Cardiac septum (tissue), 1 donor: ENCODE measurements at regions of chr19 and their contacts with region 1.

Region 1: GRCh38 chr19:39532233-39533002 is at the start of gene EID2B:
- DNase-seq: peak; percentile 98
- total RNA-seq, gene EID2B: 2.8 TPM

Region 2: GRCh38 chr19:39397360-39398296 is 134.8 kb before region 1 on chr19:
- intact Hi-C with region 1: loop called (anchors 5 kb)
- DNase-seq: peak; percentile 95

Region 3: GRCh38 chr19:39445265-39446111 is 86.9 kb before region 1 on chr19 and contains the start of gene SUPT5H:
- intact Hi-C with region 1: loop called (anchors 10 kb)
- DNase-seq: peak; percentile 98
- total RNA-seq, gene SUPT5H: 79.9 TPM

Region 4: GRCh38 chr19:39474139-39474622 is 58.2 kb before region 1 on chr19:
- intact Hi-C with region 1: loop called (anchors 2 kb)
- DNase-seq: no peak

Region 5: DNA sequence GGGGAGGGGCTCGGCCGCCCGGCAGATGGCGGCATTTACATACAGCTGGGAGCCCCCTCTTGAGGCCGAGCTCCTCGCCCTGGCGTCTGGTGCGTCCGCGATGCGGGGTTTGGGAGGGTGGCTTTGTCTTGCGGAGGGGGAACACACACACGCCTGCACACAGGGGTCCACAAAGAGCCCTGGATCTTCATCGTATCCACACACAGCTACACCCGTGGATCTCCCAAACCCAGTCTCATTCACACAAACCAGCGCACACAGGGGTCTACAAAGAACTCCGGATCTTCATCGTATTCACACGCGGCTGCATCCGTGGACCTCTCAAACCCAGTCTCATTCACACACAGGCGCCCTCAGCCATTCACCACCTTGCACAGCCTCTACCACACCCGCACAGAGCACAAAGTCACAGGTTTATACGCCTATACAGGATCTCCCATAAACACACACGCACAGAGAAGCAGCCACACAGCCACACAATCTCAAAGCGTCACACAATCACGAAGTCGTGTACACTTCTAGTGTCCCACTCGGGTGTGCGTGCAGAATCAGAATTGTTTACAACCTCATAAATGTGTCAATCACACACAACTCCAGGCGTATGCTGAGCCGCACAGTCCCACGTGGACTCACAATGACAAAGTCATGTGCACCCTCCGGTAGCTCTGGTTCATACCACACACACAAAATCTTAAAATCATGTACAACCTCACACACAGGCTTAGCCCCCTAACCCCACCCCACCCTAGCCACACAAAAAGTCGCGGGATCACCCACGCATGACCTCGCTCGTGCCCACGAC is 34.2 kb before region 1 on chr19:
- intact Hi-C with region 1: loop called (anchors 5 kb)
- DNase-seq: no peak